IMR-90 (cell line): ENCODE measurements at regions of chr5 and their contacts with region 1.

Region 1: GRCh38 chr5:149960272-149961185 is at the start of gene SLC26A2:
- DNase-seq: peak; percentile 97
- ATAC-seq: peak; percentile 100
- H3K4me3 ChIP-seq: peak within 1 kb of the TSS; percentile 87
- H3K27ac ChIP-seq: peak within 1 kb of the TSS; percentile 70
- H3K4me1 ChIP-seq: peaks cover 6% of the 10 kb centered on the region
- H3K27me3 ChIP-seq: no peaks in the 10 kb centered on the region
- CTCF ChIP-seq: no peak
- POLR2A ChIP-seq: peak; percentile 89
- RAD21 ChIP-seq: no peak
- total RNA-seq, gene SLC26A2: 9.9 and 12.8 TPM in 2 replicates

Region 2: GRCh38 chr5:149852641-149853330 is 107.7 kb before region 1 on chr5:
- CTCF ChIA-PET with region 1: interaction called, 8 read pairs
- POLR2A ChIA-PET with region 1: no interaction called
- dilution Hi-C with region 1: no loop called
- in situ Hi-C with region 1: no loop called
- intact Hi-C with region 1: loop called (anchors 5 kb)
- DNase-seq: peak; percentile 77
- ATAC-seq: peak; percentile 91
- H3K4me3 ChIP-seq: no peak overlapping the region
- H3K27ac ChIP-seq: no peak overlapping the region
- H3K4me1 ChIP-seq: peaks cover 2% of the 10 kb centered on the region; the same call in 1 of the 2 replicates
- H3K27me3 ChIP-seq: peaks cover 44% of the 10 kb centered on the region
- CTCF ChIP-seq: peak; percentile 82
- POLR2A ChIP-seq: no peak
- RAD21 ChIP-seq: peak; percentile 72

Region 3: DNA sequence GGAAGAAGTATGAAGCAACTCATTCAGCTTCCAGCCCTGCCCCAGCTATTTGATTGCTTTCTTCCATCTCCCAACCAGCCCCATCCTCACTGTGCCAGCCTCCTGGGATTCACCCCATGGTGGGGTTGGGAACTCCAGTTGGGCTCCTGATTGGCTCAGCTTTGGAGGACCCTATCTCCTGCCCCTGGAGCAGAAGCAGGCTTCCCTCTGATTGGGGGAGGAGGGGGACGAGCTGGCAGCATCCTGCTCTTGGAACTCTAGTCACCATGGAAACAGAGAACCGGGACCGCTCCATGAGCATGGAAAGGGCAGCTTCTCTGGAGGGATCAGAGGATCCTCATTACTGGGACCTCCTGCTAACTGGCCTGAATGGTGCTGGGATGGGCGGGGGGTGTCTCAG is 231.9 kb after region 1 on chr5:
- CTCF ChIA-PET with region 1: no interaction called
- POLR2A ChIA-PET with region 1: no interaction called
- dilution Hi-C with region 1: no loop called
- in situ Hi-C with region 1: no loop called
- intact Hi-C with region 1: no loop called
- DNase-seq: no peak
- ATAC-seq: no peak
- H3K4me3 ChIP-seq: no peak overlapping the region
- H3K27ac ChIP-seq: no peak overlapping the region
- H3K4me1 ChIP-seq: peaks cover 2% of the 10 kb centered on the region; the same call in 1 of the 2 replicates
- H3K27me3 ChIP-seq: peaks cover 88% of the 10 kb centered on the region
- CTCF ChIP-seq: no peak
- POLR2A ChIP-seq: no peak
- RAD21 ChIP-seq: no peak

Region 4: DNA sequence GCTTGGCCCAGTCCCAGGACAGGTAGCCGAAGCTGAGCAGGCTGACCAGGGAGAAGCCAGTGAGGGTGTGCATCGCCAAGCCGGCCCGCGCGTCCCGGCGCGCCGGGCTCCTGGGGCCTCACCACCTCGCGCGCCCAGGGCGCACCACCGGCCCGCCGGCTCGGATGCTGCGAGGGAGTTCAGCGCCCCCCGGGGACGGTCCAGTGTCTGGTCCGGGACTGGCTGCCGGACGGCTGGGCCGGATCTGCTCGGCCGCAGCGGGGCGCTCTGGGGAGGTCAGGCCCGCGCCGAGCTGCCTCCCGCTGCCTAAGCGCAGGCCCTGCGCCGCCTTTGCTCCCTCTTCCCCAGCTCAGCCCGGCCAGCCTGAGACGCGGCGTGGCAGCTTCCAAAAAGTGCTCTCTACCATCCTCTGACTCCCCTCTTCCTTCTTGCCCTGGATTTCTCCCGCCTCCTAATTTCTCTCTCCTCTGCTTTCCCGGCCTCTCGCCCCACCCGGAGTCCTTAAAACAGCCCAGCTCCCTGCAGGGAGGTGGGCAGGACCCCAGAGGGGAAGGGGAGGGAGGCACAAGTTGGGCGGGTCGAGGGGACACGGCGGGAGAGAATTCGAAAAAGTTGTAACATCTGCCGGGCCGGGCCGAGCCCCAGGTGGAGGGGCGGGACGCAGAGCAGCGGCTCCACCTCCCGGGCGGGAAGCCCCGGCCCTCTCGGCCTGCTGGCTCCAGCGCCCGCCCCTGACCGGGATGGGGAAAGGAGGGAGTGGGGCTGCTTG is 342.0 kb after region 1 on chr5 and contains the start of gene ARSI:
- CTCF ChIA-PET with region 1: no interaction called
- POLR2A ChIA-PET with region 1: no interaction called
- dilution Hi-C with region 1: no loop called
- in situ Hi-C with region 1: no loop called
- intact Hi-C with region 1: no loop called
- DNase-seq: no peak
- ATAC-seq: peak; percentile 68
- H3K4me3 ChIP-seq: peak within 1 kb of the TSS; percentile 38
- H3K27ac ChIP-seq: peak within 1 kb of the TSS; percentile 93
- H3K4me1 ChIP-seq: peaks cover 45% of the 10 kb centered on the region
- H3K27me3 ChIP-seq: no peaks in the 10 kb centered on the region
- CTCF ChIP-seq: peak; percentile 53
- POLR2A ChIP-seq: no peak
- RAD21 ChIP-seq: peak; percentile 30
- total RNA-seq, gene ARSI: 15.0 and 15.2 TPM in 2 replicates